HEK293 (cell line): ENCODE measurements at regions of chr11 and their contacts with region 1.

Region 1: DNA sequence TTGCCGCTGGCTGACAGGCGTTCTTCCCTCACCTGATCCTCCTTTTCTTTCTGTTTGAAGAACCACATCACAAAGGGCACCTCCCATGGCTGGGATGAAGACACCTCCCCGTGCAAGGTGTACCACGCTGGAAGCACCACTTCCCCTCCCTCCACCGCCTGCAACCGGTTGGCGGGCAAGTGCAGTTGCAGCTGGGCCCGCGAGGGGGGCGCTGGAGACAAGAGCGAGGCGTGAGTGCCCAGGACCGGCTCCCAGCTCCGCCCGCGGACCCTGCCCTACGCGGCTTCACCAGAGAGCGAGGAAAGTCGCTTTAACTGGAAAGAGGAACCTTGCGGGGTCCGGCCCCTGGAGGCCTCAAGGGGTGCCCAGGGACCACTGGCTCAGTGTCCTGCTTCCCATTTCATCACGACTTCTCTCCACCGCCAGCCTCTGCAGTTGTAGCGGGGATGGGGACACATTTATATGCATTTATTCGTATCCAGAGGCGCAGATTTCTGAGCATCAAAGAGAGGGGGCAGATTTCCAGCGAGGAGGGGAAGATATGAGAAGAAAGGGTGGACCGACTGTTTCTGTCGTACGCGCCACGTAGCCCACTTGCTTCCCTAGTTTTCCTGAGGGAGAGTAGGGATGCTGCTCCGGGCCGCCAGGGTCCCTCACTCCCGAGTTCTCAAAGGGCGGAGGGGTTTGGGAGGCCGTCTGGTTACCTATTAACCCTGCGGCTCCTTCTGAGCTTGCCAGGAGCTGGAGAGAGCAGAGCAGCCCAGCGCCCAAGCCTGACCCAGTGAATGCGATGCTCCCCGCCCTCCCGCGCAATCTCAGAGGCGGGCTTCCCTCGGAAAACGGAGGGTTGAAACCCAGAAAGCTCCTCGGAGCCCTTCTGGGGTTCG is 3.5 kb downstream of the ESAM start:
- H3K4me3 ChIP-seq: no peak overlapping the region
- H3K27ac ChIP-seq: no peak overlapping the region
- H3K4me1 ChIP-seq: no peaks in the 10 kb centered on the region
- CTCF ChIP-seq: no peak

Region 2: GRCh38 chr11:124429599-124429998 is 329.0 kb before region 1 on chr11:
- CTCF ChIA-PET with region 1: no interaction called
- POLR2A ChIA-PET with region 1: no interaction called
- H3K4me3 ChIP-seq: no peak overlapping the region
- H3K27ac ChIP-seq: no peak overlapping the region
- H3K4me1 ChIP-seq: no peaks in the 10 kb centered on the region
- CTCF ChIP-seq: no peak

Region 3: DNA sequence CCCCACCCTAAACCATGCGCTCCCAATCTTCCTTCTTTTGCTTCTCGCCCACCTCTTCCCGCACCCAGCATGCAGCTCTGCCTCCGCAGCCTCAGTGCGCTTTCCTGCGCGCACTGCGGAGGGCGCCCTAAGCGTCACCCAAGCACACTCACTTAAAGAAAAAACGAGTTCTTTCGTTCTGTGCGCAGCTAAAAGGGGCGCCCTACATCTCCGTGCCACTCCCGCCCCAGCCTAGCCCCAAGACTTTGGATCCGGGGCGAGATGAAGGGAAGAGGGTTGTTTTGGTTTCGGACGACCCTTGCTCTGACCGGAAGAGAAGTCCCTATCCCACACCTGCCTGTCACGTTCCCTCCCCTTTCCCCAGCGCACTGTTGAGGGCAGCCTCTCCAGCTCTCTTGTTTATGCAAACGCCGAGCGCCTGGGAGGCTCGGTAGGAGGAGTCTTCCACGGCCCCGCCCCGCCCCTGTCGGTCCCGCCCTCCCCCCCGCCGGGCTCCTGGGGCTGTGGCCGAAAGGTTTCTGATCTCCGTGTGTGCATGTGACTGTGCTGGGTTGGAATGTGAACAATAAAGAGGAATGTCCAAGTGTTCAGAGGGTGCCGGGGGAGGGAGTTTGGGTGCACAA is 11.8 kb before region 1 on chr11:
- CTCF ChIA-PET with region 1: interaction called, 13 read pairs
- POLR2A ChIA-PET with region 1: interaction called, 10 read pairs
- H3K4me3 ChIP-seq: peak overlapping the region; percentile 53
- H3K27ac ChIP-seq: no peak overlapping the region; the same call in 1 of the 2 replicates
- H3K4me1 ChIP-seq: no peaks in the 10 kb centered on the region
- CTCF ChIP-seq: peak; percentile 77

Region 4: DNA sequence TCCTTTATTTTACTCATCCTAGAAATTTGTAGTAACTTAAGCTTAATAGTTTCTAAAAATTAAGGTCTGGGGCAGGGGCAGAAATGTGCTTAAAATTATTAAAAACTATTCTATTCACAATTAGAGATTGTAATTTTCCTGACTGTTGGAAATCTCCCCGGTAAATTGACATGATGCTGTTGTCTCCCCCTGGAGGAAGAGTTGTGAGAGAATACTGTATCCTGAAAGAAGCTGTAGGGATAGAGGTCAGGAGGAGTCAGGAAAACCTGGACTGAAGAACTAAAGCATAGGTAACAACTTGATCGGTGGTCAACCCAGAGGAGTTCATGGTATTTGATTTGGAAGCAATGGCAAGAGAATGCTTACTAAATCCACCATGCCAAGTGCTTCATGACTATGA is 19.7 kb after region 1 on chr11:
- CTCF ChIA-PET with region 1: interaction called, 17 read pairs
- POLR2A ChIA-PET with region 1: interaction called, 10 read pairs
- H3K4me3 ChIP-seq: no peak overlapping the region
- H3K27ac ChIP-seq: no peak overlapping the region
- H3K4me1 ChIP-seq: no peaks in the 10 kb centered on the region
- CTCF ChIP-seq: no peak

Region 5: DNA sequence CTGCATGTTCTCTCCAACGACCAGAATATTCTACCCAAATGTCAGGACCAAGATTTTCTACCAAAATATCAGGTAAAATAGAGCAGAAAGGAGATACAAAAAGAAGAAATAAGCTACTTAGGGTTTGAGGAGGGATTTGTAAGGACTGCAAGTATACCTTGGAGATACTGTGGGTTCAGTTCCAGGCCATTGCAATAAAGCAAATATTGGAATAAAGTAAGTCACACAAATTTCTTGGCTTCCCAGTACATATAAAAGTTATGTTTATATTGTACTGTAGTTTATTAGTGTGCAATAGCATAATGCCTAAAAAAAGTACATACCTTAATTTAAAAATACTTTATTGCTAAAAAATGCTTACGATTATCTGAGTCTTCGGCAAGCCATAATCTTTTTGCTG is 229.5 kb after region 1 on chr11:
- CTCF ChIA-PET with region 1: no interaction called
- POLR2A ChIA-PET with region 1: no interaction called
- H3K4me3 ChIP-seq: no peak overlapping the region
- H3K27ac ChIP-seq: no peak overlapping the region
- H3K4me1 ChIP-seq: no peaks in the 10 kb centered on the region
- CTCF ChIP-seq: no peak

Region 6: DNA sequence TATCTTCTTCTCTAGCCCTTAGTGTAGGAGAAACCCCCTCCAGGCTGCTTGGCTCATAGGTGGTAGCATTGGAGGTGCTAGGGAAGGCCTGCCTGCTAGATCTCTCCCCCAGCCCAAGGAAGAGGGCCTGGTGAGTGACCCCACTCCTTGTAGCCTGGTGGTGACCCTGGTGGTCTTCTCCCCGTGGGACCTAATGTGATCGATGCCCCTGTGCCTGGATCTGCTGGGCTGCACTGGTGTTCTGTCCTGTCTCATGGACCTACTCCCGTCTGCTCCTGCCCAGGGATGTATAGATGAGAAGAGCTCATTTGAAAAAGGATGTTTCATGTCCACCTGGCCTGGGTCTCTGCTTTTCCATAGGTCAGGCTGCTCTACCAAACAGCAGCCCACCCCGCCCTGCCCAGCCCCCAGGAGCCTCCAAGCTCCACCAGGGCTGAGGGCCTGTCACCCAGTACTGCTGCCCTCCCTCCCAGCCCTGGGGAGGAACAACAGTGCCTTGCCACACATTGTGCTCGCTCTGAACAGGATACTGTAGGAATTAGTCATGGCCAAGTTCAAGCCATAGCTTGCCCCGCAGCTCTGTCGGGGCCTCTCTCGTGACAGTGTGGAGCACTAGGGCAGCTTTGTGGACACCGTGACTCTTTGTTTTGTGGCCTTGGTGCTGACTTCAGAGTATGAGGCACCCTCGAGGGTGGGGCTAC is 324.2 kb after region 1 on chr11:
- CTCF ChIA-PET with region 1: no interaction called
- POLR2A ChIA-PET with region 1: no interaction called
- H3K4me3 ChIP-seq: no peak overlapping the region
- H3K27ac ChIP-seq: no peak overlapping the region
- H3K4me1 ChIP-seq: no peaks in the 10 kb centered on the region
- CTCF ChIP-seq: no peak